Cardiac septum (tissue), 1 donor: ENCODE measurements at regions of chr11 and their contacts with region 1.

Region 1: DNA sequence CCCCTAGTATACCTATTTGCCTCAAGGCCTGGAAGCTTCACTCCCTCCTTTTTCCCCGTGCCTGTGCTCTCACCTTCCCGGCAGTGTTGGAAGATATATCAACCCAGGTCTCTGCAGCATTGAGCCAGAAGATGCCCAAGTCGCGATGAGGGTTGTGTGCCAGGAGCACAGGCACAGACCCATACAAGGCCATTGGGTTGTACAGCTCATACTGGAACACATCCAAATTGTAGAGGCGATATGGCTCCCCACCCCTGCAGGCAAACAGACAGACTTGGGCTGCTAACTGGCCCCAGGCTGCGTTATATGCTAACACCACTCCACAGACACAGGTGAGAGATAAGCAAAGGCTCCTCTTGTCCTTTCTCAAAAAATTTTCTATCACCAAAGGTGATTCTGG is 10.7 kb upstream of the B3GAT3 start:
- DNase-seq: no peak

Region 2: DNA sequence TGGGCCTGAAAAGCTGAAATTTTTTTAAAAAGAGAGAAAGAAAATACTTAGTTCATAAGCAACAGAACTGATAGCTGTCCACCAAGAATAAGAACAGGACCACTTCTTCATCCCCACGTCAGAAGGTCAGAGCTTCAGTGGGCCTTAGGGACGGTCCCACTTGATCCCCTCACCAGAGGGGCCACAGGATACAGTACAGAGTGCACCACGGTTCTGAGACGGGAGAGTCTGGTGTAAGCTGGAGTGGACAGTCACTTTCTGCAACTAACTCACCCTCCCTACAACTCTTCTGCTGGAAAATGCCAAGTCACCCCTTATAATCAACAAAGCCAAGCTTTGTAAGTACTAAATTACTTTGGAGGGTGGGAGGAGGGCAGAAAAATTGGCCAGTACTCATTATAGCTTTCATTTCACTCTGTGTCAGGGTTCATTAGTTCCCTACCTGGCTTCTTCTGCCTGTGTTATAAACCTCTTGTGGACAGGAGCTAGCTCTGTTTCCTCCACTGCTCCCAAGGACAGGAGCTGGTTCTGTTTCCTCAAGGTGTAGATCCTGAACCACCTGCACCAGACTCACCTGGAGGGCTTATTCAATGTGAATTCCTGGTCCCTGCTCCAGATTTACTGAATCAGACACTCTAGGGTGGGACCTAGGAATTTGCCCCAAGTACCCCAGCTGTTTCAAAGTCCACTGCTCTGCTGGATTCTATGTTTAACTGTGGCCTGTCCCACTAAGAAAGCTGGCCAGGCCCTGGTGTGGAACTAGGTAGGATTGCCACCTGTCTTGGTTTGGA is 174.1 kb before region 1 on chr11:
- intact Hi-C with region 1: no loop called
- DNase-seq: no peak

Region 3: GRCh38 chr11:62580959-62581715 is 51.4 kb before region 1 on chr11:
- intact Hi-C with region 1: no loop called
- DNase-seq: no peak

Region 4: DNA sequence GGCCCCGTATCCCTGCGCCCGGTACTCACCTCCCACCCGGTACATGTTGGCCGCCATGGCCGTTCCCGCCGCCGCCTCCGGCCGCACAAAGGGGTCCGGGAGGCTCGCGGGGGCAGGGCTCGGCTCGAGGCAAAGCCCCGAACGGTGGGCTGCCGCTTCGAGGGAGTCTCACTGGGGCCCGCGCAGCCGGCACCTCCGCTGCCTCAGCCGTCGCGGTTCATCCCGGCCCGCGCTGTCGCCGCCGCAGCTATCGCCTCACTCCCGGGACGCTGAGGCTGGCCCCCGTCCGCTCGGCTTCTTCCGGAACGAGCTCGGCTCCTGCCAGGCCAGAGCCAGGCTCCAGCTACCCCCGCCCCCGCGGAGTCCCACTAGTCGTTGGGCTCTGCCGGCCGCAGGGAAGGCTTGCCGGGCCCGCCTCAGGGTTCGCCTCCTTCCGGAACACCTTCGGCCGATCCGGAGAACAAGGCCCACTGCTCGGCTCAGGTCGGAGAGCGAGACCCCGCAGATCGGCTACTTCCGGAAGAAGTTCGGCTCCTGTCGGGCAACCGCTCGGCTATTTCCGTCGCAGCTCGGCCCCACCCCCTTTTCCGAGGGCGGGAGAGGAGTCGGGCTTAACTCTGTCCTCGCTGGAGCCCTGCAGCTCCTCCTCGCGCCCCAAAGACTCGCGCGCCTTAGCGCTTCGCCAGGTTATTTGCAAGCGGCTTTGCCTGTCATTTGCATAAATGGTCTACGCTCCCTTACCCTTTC is 30.9 kb before region 1 on chr11 and contains the start of gene MTA2:
- intact Hi-C with region 1: no loop called
- DNase-seq: peak; percentile 98
- total RNA-seq, gene MTA2: 36.8 TPM

Region 5: GRCh38 chr11:63017306-63017974 is 384.9 kb after region 1 on chr11:
- intact Hi-C with region 1: loop called (anchors 10 kb)
- DNase-seq: no peak